GM23248 (cell line): ENCODE measurements at regions of chr1 and their contacts with region 1.

Region 1: GRCh38 chr1:62175568-62176179 is 19.0 kb upstream of the L1TD1 start:
- DNase-seq: peak; percentile 71
- H3K4me3 ChIP-seq: no peak overlapping the region
- H3K27ac ChIP-seq: no peak overlapping the region
- H3K4me1 ChIP-seq: no peaks in the 10 kb centered on the region
- H3K27me3 ChIP-seq: peaks cover 6% of the 10 kb centered on the region

Region 2: GRCh38 chr1:62407405-62408009 is 231.8 kb after region 1 on chr1:
- in situ Hi-C with region 1: loop called (anchors 5 kb)
- DNase-seq: peak; percentile 68
- H3K4me3 ChIP-seq: no peak overlapping the region
- H3K27ac ChIP-seq: no peak overlapping the region
- H3K4me1 ChIP-seq: no peaks in the 10 kb centered on the region
- H3K27me3 ChIP-seq: no peaks in the 10 kb centered on the region

Region 3: DNA sequence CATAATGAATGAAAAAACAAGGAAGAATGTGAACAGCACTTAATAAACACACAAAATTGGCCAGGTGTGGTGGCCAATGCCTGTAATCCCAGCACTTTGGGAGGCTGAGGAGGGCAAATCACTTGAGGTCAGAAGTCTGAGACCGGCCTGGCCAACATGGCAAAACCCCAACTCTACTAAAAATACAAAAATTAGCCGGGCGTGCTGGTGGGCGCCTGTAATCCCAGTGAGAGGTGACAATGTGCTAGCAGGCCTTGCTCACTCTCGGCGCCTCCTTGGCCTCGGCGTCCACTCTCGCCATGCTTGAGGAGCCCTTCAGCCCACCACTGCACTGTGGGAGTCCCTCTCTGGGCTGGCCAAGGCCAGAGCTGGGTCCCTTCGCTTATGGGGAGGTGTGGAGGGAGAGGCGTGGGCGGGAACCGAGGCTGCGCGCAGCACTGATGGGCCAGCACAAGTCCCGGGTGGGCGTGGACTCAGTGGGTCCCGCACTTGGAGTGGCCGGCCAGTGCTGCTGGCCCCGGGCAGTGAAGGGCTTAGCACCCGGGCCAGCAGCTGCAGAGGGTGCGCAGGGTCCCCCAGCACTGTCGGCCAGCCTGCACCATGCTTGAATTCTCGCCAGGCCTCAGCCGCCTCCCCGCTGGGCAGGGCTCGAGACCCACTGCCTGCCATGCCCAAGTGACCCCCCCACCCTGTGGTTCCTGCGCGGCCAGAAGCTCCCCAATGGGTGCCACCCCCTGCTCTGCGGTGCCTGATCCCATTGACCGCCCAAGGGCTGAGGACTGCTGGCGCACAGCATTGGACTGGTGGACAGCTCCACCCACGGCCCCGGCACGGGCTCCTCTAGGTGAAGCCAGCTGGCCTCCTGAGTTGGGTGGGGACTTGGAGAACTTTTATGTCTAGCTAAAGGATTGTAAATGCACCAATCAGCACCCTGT is 577.6 kb after region 1 on chr1:
- in situ Hi-C with region 1: loop called (anchors 10 kb)
- DNase-seq: no peak
- H3K4me3 ChIP-seq: no peak overlapping the region
- H3K27ac ChIP-seq: no peak overlapping the region
- H3K4me1 ChIP-seq: peaks cover 7% of the 10 kb centered on the region; the same call in 1 of the 2 replicates
- H3K27me3 ChIP-seq: no peaks in the 10 kb centered on the region